ENCODE measurements at regions of chr10 and their contacts with region 1.

Region 1: DNA sequence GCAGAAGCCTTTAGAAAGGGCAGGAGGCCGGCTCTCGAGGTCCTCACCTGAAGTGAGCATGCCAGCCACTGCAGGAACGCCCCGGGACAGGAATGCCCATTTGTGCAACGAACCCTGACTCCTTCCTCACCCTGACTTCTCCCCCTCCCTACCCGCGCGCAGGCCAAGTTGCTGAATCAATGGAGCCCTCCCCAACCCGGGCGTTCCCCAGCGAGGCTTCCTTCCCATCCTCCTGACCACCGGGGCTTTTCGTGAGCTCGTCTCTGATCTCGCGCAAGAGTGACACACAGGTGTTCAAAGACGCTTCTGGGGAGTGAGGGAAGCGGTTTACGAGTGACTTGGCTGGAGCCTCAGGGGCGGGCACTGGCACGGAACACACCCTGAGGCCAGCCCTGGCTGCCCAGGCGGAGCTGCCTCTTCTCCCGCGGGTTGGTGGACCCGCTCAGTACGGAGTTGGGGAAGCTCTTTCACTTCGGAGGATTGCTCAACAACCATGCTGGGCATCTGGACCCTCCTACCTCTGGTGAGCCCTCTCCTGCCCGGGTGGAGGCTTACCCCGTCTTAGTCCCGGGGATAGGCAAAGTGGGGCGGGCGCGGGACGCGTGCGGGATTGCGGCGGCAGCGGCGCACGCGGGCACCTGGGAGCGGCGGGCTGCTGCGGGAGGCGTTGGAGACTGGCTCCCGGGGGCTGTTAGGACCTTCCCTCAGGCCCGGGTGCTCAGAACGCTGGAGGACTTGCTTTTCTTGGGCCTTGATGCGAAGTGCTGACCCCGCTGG is at the start of gene FAS:
- DNase-seq: no peak
- H3K4me3 ChIP-seq: peak within 1 kb of the TSS; percentile 77
- CTCF ChIP-seq: no peak

Region 2: DNA sequence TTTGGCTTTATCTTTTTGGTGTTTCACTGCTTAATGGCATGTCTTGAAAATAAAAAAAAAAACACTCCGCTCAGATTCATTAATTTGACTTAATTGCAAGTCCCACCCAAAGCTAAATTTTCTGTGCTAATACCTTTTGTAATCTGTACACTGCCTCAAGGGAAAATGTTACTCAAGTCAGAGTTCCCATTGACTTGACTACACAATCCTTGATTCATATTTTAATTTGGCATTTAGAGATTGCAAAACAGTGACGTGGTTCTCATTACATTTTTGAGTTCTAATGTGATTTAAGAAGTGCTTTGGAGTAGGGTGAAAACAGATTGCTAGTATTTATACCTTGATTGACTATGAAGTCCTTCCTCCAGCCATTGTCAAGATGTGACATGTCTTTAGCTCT is 209.4 kb before region 1 on chr10:
- CTCF ChIA-PET with region 1: no interaction called
- POLR2A ChIA-PET with region 1: no interaction called
- DNase-seq: no peak
- H3K4me3 ChIP-seq: no peak overlapping the region
- CTCF ChIP-seq: no peak

Region 3: GRCh38 chr10:88979153-88979562 is 11.4 kb before region 1 on chr10:
- CTCF ChIA-PET with region 1: interaction called, 38 read pairs
- POLR2A ChIA-PET with region 1: interaction called, 7 read pairs
- DNase-seq: peak; percentile 76
- H3K4me3 ChIP-seq: no peak overlapping the region
- CTCF ChIP-seq: no peak

Region 4: DNA sequence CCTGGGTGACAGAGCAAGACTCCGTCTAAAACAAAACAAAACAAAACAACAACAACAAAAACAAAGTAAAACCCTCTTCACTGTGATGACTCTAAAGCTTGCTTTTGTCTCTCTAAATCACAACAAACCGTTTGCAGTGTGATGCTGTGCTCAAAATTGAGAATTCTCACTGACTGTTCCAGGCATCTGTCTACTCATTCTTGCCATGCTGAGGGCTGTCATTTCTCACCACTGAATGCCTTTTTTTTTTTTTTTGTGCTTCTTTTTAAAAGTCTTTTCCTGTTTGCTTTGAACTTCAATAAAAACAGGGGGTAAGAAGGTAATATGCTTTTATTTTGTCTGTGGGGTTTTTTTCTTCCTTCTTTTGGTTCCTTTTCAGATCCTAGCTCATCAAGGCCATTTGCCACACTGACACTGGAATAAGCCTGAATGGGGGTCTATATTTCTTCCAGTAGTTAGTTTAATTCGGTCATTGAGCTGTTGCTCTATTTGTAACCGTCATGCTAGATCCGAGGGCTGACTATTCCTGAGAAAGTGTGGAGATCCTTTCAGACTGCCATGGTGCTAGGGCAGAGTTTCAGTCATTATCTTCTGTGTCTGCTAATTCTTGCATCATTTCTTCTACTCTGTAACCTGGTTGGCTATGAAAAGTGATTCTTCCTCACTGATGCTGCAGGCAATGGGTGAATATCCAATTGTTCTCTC is 10.6 kb after region 1 on chr10:
- CTCF ChIA-PET with region 1: interaction called, 15 read pairs
- POLR2A ChIA-PET with region 1: interaction called, 5 read pairs
- DNase-seq: no peak
- H3K4me3 ChIP-seq: no peak overlapping the region
- CTCF ChIP-seq: no peak

Region 5: GRCh38 chr10:89296220-89296648 is 305.7 kb after region 1 on chr10:
- CTCF ChIA-PET with region 1: no interaction called
- POLR2A ChIA-PET with region 1: no interaction called
- DNase-seq: no peak
- H3K4me3 ChIP-seq: no peak overlapping the region
- CTCF ChIP-seq: no peak